WTC11 (cell line): ENCODE measurements at regions of chr4 and their contacts with region 1.

Region 1: DNA sequence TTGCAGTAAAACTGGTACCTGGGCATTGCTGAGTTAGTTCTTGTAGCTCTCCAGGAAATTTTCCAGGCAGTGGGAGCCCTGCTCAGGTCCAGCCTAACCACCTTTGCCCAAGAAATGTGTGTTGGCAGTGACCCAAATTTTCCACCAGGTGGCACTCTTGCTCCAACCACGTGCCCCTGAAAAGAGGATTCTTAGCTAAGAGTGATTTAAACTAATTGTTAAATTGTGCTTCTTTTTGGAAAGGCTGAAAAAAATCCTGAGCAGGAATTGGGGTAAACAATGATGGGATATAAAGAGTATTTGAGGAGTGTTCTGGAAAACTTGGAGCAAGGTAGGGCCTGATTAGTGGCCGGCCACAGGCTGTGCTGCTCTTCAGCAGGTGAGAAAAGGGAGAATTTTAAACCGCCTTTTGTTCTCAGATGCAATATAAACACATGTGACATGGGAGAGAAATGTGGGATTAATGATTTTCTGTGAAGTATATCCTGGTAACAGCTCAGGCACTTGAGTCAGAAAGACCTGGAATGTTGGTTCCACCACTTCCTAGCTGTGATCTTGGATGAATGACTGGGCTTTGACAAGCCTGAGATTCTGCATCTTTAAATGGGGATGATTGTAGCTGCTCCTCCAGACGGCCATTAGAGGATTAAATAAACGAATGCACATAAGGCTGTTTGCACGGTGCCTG is 219.6 kb downstream of the PTTG2 start:
- DNase-seq: peak; percentile 81
- ATAC-seq: peak; percentile 78
- H3K4me3 Mint-ChIP-seq: no peak overlapping the region
- H3K27ac Mint-ChIP-seq: no peak overlapping the region
- H3K4me1 Mint-ChIP-seq: peaks cover 7% of the 10 kb centered on the region
- H3K27me3 Mint-ChIP-seq: peaks cover 8% of the 10 kb centered on the region
- CTCF ChIP-seq: peak; percentile 91

Region 2: DNA sequence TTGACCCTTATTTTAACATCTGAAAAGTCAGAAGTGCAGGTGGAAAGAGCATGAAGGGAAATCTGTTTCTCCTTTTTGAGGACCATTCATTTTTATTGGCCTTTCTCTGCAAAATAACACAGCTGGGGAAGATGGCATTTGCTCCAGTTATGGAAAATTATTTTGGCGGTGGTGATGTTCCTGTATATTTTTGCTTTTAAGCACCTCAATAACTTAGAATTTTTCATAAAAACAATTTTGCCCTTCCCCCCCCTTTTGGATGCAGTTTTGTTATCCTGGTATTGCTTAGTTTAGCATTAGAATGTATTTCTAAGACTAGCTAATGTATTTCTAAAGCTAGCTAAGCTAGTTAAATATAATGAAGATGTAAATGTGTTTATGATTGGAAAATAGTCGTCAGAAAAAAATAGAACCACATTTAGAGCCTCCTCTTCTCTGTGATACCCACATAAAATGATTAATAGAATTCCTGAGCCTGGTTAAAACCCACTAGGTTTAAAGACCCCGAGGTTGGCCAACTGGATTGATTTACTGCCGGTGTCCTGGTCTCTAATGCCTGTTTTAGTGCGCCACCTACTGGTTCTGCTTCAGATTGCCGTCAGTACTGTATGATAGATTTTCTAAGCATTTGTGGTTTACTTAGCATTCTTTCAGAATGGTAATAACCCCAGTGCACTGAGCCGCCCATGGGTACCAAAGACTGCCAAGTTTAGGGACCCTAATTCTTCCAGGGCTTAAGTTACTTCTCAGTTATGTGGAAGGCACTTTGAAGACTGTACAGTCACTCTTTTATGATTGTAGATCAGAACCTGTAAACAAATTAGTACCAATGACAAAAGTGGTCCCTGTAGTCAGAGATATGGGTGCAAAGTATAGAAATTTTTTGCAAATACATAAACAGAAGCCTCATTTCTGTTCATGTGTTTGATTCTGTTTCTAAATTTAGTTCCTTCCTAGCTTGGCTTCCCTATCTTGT is 495.6 kb after region 1 on chr4:
- CTCF ChIA-PET with region 1: interaction called, 28 read pairs
- POLR2A ChIA-PET with region 1: no interaction called
- DNase-seq: peak; percentile 85
- ATAC-seq: peak; percentile 53
- H3K4me3 Mint-ChIP-seq: peak overlapping the region; percentile 36; the same call in 1 of the 2 replicates
- H3K27ac Mint-ChIP-seq: no peak overlapping the region
- H3K4me1 Mint-ChIP-seq: peaks cover 63% of the 10 kb centered on the region
- H3K27me3 Mint-ChIP-seq: no peaks in the 10 kb centered on the region
- CTCF ChIP-seq: peak; percentile 87

Region 3: DNA sequence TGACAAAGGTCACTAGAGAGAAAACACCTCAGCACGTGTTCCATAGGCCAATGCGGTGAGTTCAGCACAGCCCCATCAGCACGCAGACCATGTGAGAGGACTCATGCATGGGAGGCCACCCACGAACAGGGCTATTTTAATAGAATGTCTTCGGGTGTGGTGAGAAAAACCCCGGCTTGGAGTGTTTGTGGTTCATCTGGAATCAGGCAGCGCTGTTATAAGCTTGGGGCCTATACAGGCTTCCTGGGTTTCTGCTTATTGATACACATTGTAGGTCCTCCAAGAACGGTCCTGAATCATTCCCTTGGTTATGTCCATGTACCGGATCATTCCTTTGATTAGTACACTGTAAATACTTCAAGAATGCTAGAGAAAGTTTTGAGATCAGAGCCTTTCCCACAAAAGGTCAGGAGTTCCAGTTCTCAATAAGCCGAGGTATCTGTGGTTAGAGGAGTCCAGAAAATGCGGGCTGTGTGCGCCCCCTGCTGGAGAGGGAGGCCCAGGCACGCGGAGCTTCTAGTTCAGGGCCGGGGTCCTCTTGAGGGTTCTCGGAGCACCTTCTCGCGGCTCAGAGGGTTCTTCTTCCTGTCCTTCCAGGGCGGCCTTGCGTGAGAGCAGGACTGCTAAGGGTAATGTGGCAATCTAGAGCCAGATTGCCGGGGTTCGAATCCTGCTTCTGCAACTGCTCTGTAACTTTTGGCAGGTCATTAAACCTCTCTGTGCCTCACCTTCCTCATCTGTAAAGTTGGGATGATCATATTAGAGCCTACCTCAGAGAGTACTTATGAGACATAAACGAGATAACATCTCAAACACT is 551.2 kb after region 1 on chr4:
- CTCF ChIA-PET with region 1: interaction called, 41 read pairs
- POLR2A ChIA-PET with region 1: no interaction called
- DNase-seq: peak; percentile 93
- ATAC-seq: peak; percentile 86
- H3K4me3 Mint-ChIP-seq: no peak overlapping the region
- H3K27ac Mint-ChIP-seq: no peak overlapping the region
- H3K4me1 Mint-ChIP-seq: peaks cover 14% of the 10 kb centered on the region
- H3K27me3 Mint-ChIP-seq: no peaks in the 10 kb centered on the region
- CTCF ChIP-seq: peak; percentile 93